Transverse colon (tissue), 4 donors: ENCODE measurements at regions of chr5 and their contacts with region 1.

Region 1: GRCh38 chr5:132951897-132952296 is 11.5 kb downstream of the AFF4 start:
- DNase-seq: no peak
- H3K4me3 ChIP-seq: no peak overlapping the region
- H3K27ac ChIP-seq: no peak overlapping the region
- H3K4me1 ChIP-seq: peaks cover 0 to 31% (median 3%) of the 10 kb centered on the region in 4 donors
- H3K27me3 ChIP-seq: no peaks in the 10 kb centered on the region
- CTCF ChIP-seq: no peak
- EP300 ChIP-seq: no peak
- POLR2A ChIP-seq: no peak

Region 2: GRCh38 chr5:132736853-132737833 is 214.8 kb before region 1 on chr5 and contains the start of gene KIF3A:
- in situ Hi-C with region 1: no loop called
- intact Hi-C with region 1: no loop called
- DNase-seq: peak; percentile 98
- H3K4me3 ChIP-seq: peak within 1 kb of the TSS; percentile 69 to 90 (median 81)
- H3K27ac ChIP-seq: peak within 1 kb of the TSS; percentile 67 to 93 (median 86)
- H3K4me1 ChIP-seq: peaks cover 0 to 12% (median 8%) of the 10 kb centered on the region in 4 donors
- H3K27me3 ChIP-seq: peaks cover 19% of the 10 kb centered on the region
- CTCF ChIP-seq: peak; percentile 20 to 67 (median 34)
- EP300 ChIP-seq: no peak
- POLR2A ChIP-seq: peak; percentile 38
- total RNA-seq, gene KIF3A: 1.9 to 7.0 (median 2.8) TPM

Region 3: DNA sequence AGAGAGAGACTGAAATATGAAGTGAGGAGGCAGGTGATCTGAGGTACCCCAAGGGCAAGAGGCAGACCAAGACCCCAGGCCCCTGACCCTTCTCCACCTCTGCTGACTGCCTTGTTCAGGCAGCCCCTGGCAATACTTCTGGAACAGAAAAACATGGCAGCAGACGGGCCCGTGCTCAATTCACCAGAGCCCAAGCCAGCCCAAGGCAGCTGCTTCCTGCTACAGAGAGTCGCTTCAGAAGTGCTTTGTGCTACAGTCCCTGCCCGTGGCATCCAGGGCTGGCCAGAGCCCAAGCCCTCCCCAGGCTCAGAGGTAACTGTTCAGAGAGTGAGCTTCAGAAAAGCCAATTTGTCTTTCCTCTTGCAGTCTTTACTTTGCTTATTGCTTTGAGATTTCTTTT is 811.8 kb after region 1 on chr5:
- in situ Hi-C with region 1: no loop called
- intact Hi-C with region 1: loop called (anchors 5 kb)
- DNase-seq: no peak
- H3K4me3 ChIP-seq: no peak overlapping the region
- H3K27ac ChIP-seq: no peak overlapping the region
- H3K4me1 ChIP-seq: no peaks in the 10 kb centered on the region
- H3K27me3 ChIP-seq: peaks cover 3% of the 10 kb centered on the region
- CTCF ChIP-seq: no peak
- EP300 ChIP-seq: no peak
- POLR2A ChIP-seq: no peak